ENCODE measurements at regions of chr2 and their contacts with region 1.

Region 1: GRCh38 chr2:73290049-73290839 is 3.1 kb downstream of the EGR4 start:
- DNase-seq: peak; percentile 72
- H3K4me3 Mint-ChIP-seq: no peak overlapping the region
- H3K27ac Mint-ChIP-seq: no peak overlapping the region
- H3K4me1 Mint-ChIP-seq: peaks cover 20% of the 10 kb centered on the region
- H3K27me3 Mint-ChIP-seq: peaks cover 68% of the 10 kb centered on the region

Region 2: GRCh38 chr2:73212448-73213176 is 77.6 kb before region 1 on chr2:
- CTCF ChIA-PET with region 1: interaction called, 18 read pairs
- DNase-seq: peak; percentile 79
- H3K4me3 Mint-ChIP-seq: no peak overlapping the region
- H3K27ac Mint-ChIP-seq: no peak overlapping the region
- H3K4me1 Mint-ChIP-seq: peaks cover 32% of the 10 kb centered on the region
- H3K27me3 Mint-ChIP-seq: peaks cover 20% of the 10 kb centered on the region

Region 3: DNA sequence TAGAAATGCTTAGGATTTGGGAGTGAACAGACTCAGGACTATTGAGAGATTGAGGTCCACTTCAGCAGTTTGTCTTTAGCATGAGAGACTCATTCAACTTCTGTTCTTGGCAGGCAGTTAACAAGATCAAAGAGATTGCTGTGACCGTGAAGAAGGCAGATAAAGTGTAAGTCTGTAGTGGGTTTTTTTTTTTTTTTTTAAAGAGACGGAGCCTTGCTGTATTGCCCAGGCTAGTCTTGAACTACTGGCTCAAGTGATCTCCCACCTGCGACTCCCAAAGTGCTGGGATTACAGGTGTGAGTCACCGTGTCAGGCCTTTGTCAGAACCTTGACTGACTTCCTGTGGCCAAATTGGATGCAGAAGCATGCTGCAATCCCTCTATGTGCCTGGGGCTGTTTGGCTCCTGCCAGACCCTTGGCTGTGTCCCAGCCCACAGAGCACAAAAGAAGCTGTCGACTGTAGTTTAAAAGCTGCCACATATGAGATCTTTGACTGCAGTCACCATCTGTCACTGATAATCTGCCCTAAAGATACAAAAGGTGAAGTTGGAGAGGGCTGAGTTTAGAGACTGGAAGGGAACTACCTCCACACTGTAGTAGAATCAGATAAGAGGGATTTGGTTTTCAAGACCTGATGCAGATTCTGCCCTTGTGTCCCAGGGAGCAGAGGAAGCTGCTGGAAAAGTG is 46.2 kb before region 1 on chr2:
- CTCF ChIA-PET with region 1: interaction called, 10 read pairs
- DNase-seq: no peak
- H3K4me3 Mint-ChIP-seq: no peak overlapping the region
- H3K27ac Mint-ChIP-seq: no peak overlapping the region
- H3K4me1 Mint-ChIP-seq: peaks cover 3% of the 10 kb centered on the region
- H3K27me3 Mint-ChIP-seq: no peaks in the 10 kb centered on the region

Region 4: DNA sequence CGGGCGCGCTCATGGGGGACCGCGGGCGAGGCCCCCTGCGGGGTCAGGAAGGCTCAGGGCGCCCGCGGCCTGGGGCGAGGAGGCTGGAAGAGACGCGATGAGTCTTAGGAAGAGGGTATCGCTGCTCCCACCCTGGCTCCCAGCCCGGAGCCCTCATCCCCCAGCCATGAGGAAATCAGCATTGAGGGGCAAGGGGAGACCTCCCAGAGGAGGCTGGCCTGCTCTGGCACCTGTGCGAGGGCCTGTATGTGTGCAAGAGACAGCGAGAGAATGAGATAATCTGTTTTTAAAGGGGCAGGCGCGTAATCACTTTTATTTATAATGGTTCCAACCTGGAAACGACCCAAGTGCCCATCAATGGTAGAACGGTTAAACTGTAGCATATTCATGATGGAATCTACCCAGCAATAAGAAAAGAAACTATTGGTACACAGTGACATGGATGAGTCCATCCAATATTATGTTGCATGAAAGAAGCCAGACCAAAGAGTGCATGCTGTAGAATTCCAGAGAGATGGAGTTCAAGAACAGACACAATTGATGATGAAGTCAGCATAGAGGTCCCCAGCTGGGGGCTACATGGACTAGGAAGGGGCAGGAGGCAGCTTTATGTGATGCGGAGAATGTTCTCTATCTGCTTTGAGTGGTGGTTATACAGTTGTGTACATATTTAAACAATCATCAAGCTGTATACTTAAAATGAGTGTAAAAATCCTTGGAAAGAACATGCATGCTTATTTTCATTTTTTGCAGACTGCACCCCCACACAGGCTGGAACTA is 20.4 kb before region 1 on chr2:
- CTCF ChIA-PET with region 1: interaction called, 16 read pairs
- DNase-seq: no peak
- H3K4me3 Mint-ChIP-seq: peak overlapping the region; percentile 50
- H3K27ac Mint-ChIP-seq: peak overlapping the region; percentile 81
- H3K4me1 Mint-ChIP-seq: peaks cover 22% of the 10 kb centered on the region
- H3K27me3 Mint-ChIP-seq: no peaks in the 10 kb centered on the region

Region 5: DNA sequence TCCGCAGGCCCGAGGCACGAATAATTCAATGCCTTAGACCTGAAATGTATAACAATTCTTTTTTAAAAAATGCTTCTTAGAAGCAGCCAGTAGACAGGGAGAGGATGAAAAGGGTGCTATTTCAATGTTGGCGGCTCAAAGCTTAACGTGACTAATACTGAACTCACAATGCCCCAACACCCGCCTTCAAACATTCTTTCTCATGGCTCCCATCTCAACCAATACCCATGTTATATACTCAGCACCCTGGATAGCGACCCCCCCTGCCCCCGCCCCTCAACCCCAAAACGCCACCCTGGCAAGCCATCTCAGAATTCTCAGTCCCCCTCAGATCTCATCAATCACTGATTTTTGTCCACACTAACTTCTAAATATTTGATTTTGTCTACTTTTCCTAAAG is 10.4 kb before region 1 on chr2:
- CTCF ChIA-PET with region 1: interaction called, 13 read pairs
- DNase-seq: no peak
- H3K4me3 Mint-ChIP-seq: no peak overlapping the region
- H3K27ac Mint-ChIP-seq: no peak overlapping the region
- H3K4me1 Mint-ChIP-seq: peaks cover 12% of the 10 kb centered on the region
- H3K27me3 Mint-ChIP-seq: peaks cover 2% of the 10 kb centered on the region

Region 6: GRCh38 chr2:73418343-73418742 is 128.1 kb after region 1 on chr2:
- CTCF ChIA-PET with region 1: no interaction called
- DNase-seq: no peak
- H3K4me3 Mint-ChIP-seq: no peak overlapping the region
- H3K27ac Mint-ChIP-seq: no peak overlapping the region
- H3K4me1 Mint-ChIP-seq: no peaks in the 10 kb centered on the region
- H3K27me3 Mint-ChIP-seq: no peaks in the 10 kb centered on the region